ENCODE measurements at regions of chr1 and their contacts with region 1.

Region 1: GRCh38 chr1:27097484-27097917 is 57.4 kb downstream of the SLC9A1 start:
- DNase-seq: peak; percentile 66
- ATAC-seq: peak; percentile 75
- H3K4me3 ChIP-seq: no peak overlapping the region
- H3K27ac ChIP-seq: no peak overlapping the region
- H3K4me1 ChIP-seq: peaks cover 16% of the 10 kb centered on the region
- H3K27me3 ChIP-seq: no peaks in the 10 kb centered on the region
- CTCF ChIP-seq: peak; percentile 97
- POLR2A ChIP-seq: 0 out of 2 replicates have a peak, but pooled peaks have one; percentile 38
- RAD21 ChIP-seq: peak; percentile 93

Region 2: GRCh38 chr1:26838474-26839338 is 258.8 kb before region 1 on chr1:
- CTCF ChIA-PET with region 1: no interaction called
- POLR2A ChIA-PET with region 1: no interaction called
- dilution Hi-C with region 1: no loop called
- in situ Hi-C with region 1: no loop called
- intact Hi-C with region 1: no loop called
- DNase-seq: no peak
- ATAC-seq: no peak
- H3K4me3 ChIP-seq: no peak overlapping the region
- H3K27ac ChIP-seq: no peak overlapping the region
- H3K4me1 ChIP-seq: no peaks in the 10 kb centered on the region
- H3K27me3 ChIP-seq: no peaks in the 10 kb centered on the region
- CTCF ChIP-seq: no peak
- POLR2A ChIP-seq: no peak
- RAD21 ChIP-seq: no peak

Region 3: DNA sequence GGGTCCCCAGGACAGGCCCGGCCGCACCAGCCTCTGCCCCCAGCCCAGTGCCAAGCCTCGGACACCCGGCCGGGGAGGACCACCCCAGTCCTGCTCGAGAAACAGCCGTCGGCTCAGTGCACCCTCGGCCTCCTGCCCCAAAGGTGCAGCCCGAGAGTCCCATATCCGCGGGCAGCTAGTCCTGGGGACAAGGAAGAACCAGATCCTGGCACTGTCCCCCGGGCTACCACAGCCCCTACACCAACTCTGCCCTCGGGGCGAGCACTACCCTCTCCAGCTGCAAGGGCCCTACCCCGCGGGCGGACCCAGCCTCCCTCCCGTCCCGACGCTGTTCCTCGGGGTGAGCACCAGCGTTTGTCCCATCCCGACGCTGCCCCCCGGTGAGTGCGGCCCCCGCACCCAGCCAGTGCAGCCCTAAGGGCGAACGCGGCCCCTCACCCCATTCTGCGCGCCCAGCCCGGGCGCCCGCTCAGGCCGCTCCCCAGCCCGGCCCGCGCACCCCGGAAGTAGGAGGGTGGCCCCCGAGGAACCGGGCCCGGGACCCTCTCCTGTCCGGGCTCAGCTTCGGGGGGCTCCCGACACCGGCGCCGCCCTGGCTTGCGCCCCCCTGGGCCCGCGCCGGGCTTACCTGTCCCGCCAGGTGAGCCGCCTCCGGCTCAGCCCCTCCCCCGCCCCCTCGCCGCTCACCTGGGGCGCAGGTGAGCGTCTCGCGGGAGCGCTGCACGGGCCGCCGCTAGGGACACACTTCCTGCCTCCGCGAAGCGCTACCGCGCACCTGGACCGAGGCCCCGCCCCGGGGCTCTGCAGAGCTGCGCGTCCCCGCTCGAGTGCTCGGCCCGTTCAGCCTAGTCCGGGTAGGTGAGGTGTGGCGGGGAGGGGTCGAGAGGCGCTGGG is 137.5 kb before region 1 on chr1 and contains the start of gene KDF1:
- CTCF ChIA-PET with region 1: no interaction called
- POLR2A ChIA-PET with region 1: no interaction called
- dilution Hi-C with region 1: no loop called
- in situ Hi-C with region 1: loop called (anchors 5 kb)
- intact Hi-C with region 1: no loop called
- DNase-seq: no peak
- ATAC-seq: peak; percentile 4; the same call in 1 of the 2 replicates
- H3K4me3 ChIP-seq: peak within 1 kb of the TSS; percentile 8; the same call in 1 of the 2 replicates
- H3K27ac ChIP-seq: peak within 1 kb of the TSS; percentile 50; the same call in 1 of the 2 replicates
- H3K4me1 ChIP-seq: peaks cover 21% of the 10 kb centered on the region
- H3K27me3 ChIP-seq: peaks cover 11% of the 10 kb centered on the region
- CTCF ChIP-seq: no peak
- POLR2A ChIP-seq: no peak
- RAD21 ChIP-seq: no peak
- total RNA-seq, gene KDF1: not detected in 2 replicates